Activated naive CD4-positive, alpha-beta T cell treated with anti-CD3 and anti-CD28 coated beads for 36 hours (primary cell): ENCODE measurements at regions of chr17 and their contacts with region 1.

Region 1: DNA sequence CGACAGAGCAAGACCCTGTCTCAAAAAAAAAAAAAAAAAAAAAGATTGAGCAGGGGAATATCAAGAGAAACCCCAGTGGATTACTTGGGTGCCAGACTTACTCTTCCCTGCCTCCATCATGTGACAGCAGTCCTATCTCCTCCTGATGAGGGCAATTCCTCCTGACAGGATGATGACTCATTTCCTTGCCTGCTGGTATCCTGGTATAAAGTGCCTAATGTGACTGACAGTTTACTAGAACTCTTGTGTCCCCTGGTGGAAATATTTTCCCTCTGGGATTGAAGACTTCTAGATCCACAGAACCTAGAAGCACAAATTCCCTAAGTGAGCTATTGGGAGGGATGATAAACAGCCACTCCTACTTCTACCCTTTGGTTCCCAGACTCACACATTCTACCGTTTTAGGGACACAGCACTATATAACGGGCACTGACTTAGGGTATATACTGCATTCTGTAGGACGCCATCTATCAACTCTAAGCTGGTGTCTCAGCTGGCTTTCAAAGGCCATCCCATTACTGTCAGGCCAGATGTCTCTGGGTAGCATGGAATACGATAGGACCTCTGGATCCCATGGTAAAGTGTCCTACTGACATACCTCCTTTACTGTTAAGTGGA is 114.6 kb upstream of the MED13 start:
- DNase-seq: no peak
- H3K4me3 Mint-ChIP-seq: no peak overlapping the region
- H3K27ac Mint-ChIP-seq: no peak overlapping the region
- H3K4me1 Mint-ChIP-seq: no peaks in the 10 kb centered on the region
- H3K27me3 Mint-ChIP-seq: no peaks in the 10 kb centered on the region

Region 2: DNA sequence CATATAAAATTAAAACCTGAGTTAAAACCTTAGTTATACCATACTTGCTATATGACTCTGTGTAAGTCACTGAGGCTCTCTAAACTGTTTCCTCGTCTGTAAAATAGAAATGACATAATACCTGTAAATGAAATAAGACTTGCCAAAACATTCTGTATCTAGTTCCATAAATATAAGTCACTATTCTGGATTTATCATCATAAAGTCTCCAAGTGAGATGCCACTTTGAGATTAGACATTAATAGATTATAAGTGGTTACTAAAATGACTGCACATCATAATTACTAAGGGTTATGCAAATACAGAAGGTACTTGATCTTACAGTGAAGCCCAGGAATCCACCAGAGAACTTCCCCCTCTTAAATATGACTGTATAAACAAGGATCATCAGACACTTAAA is 304.4 kb before region 1 on chr17:
- CTCF ChIA-PET with region 1: no interaction called
- intact Hi-C with region 1: no loop called
- DNase-seq: no peak
- H3K4me3 Mint-ChIP-seq: no peak overlapping the region
- H3K27ac Mint-ChIP-seq: no peak overlapping the region
- H3K4me1 Mint-ChIP-seq: no peaks in the 10 kb centered on the region
- H3K27me3 Mint-ChIP-seq: no peaks in the 10 kb centered on the region

Region 3: GRCh38 chr17:61955621-61956020 is 224.0 kb before region 1 on chr17:
- CTCF ChIA-PET with region 1: no interaction called
- intact Hi-C with region 1: no loop called
- DNase-seq: no peak
- H3K4me3 Mint-ChIP-seq: no peak overlapping the region
- H3K27ac Mint-ChIP-seq: no peak overlapping the region
- H3K4me1 Mint-ChIP-seq: no peaks in the 10 kb centered on the region
- H3K27me3 Mint-ChIP-seq: no peaks in the 10 kb centered on the region

Region 4: GRCh38 chr17:62159925-62160324 is 19.7 kb before region 1 on chr17:
- CTCF ChIA-PET with region 1: no interaction called
- intact Hi-C with region 1: loop called (anchors 2 kb)
- DNase-seq: no peak
- H3K4me3 Mint-ChIP-seq: no peak overlapping the region
- H3K27ac Mint-ChIP-seq: no peak overlapping the region
- H3K4me1 Mint-ChIP-seq: peaks cover 2% of the 10 kb centered on the region
- H3K27me3 Mint-ChIP-seq: peaks cover 5% of the 10 kb centered on the region

Region 5: DNA sequence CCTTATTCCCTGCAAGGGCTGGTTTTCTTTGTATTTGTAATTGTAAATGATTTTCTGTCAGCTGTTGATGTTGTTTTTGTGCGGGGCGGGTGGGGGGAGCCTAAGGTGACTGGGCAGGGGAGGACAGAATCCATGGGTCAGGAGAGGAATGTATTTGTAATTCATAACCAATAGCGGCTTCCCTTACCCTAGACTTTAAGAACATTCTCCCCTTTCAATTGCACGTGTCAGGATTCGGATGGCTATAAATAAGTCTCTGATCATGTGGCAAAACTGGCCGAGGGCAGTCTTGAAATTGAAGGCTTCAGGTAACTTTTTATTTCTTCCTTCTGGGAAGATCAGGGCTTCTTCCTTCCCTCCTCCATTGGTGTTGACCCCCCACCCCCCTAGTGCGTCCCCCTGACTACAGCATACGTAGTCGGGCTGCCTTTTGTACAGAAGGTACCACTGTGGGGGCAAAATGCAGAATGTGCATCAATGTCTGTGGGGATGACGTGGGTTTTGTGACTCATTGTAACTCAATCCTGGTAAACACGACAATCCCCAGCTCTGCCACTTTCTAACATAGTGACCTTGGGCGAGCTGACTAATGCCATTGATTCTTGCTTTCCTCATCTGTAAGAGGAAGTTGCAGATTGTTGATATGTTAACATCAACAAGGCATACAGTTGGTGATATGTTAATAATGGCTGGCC is 612.3 kb after region 1 on chr17:
- CTCF ChIA-PET with region 1: no interaction called
- intact Hi-C with region 1: no loop called
- DNase-seq: no peak
- H3K4me3 Mint-ChIP-seq: no peak overlapping the region
- H3K27ac Mint-ChIP-seq: no peak overlapping the region
- H3K4me1 Mint-ChIP-seq: peaks cover 9% of the 10 kb centered on the region
- H3K27me3 Mint-ChIP-seq: peaks cover 11% of the 10 kb centered on the region